ENCODE measurements at regions of chr3 and their contacts with region 1.

Region 1: DNA sequence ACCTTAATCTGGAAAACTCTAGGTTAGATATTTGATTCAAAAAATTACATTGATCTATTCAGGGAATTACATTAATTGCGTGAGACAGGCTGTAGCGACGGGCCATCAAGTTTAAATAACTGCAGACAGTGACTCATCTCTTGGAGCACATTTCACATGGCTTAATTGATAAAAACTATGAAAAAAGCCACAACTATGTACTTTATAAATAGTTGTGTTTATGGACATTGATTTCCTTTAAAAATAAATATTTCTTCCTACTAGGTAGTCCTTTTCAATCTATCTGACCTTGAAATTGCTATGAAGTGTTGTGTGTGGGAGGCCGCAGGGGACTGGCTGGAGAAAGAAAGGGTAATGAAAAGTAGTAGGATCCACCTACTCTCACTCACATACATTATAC is 157.8 kb downstream of the IL1RAP start:
- DNase-seq: peak; percentile 23
- H3K4me3 ChIP-seq: no peak overlapping the region
- H3K27me3 ChIP-seq: no peaks in the 10 kb centered on the region
- CTCF ChIP-seq: no peak

Region 2: GRCh38 chr3:190513409-190514162 is 158.1 kb before region 1 on chr3 and contains the start of gene IL1RAP:
- CTCF ChIA-PET with region 1: interaction called, 4 read pairs
- POLR2A ChIA-PET with region 1: interaction called, 22 read pairs
- DNase-seq: peak; percentile 65
- H3K4me3 ChIP-seq: peak within 1 kb of the TSS; percentile 57
- H3K27me3 ChIP-seq: no peaks in the 10 kb centered on the region
- CTCF ChIP-seq: peak; percentile 7; the same call in 1 of the 2 replicates
- polyA plus RNA-seq, gene IL1RAP: 8.6 and 9.0 TPM in 2 replicates

Region 3: GRCh38 chr3:190684733-190685132 is 13.1 kb after region 1 on chr3:
- CTCF ChIA-PET with region 1: no interaction called
- POLR2A ChIA-PET with region 1: no interaction called
- DNase-seq: no peak
- H3K4me3 ChIP-seq: no peak overlapping the region
- H3K27me3 ChIP-seq: no peaks in the 10 kb centered on the region
- CTCF ChIP-seq: no peak

Region 4: GRCh38 chr3:190696777-190697501 is 25.3 kb after region 1 on chr3:
- CTCF ChIA-PET with region 1: no interaction called
- POLR2A ChIA-PET with region 1: no interaction called
- DNase-seq: no peak
- H3K4me3 ChIP-seq: no peak overlapping the region
- H3K27me3 ChIP-seq: no peaks in the 10 kb centered on the region; the same call in 1 of the 2 replicates
- CTCF ChIP-seq: peak; percentile 57